ENCODE measurements at regions of chr4 and their contacts with region 1.

Region 1: GRCh38 chr4:67638136-67638535 is 62.8 kb downstream of the UBA6 start:
- DNase-seq: no peak
- H3K4me3 Mint-ChIP-seq: no peak overlapping the region
- H3K27ac Mint-ChIP-seq: peak overlapping the region; percentile 66
- H3K4me1 Mint-ChIP-seq: peaks cover 28% of the 10 kb centered on the region
- H3K27me3 Mint-ChIP-seq: no peaks in the 10 kb centered on the region

Region 2: GRCh38 chr4:67651536-67651935 is 13.4 kb after region 1 on chr4:
- intact Hi-C with region 1: loop called (anchors 1 kb)
- DNase-seq: no peak
- H3K4me3 Mint-ChIP-seq: no peak overlapping the region
- H3K27ac Mint-ChIP-seq: no peak overlapping the region
- H3K4me1 Mint-ChIP-seq: peaks cover 13% of the 10 kb centered on the region
- H3K27me3 Mint-ChIP-seq: no peaks in the 10 kb centered on the region